ENCODE measurements at regions of chr11 and their contacts with region 1.

Region 1: DNA sequence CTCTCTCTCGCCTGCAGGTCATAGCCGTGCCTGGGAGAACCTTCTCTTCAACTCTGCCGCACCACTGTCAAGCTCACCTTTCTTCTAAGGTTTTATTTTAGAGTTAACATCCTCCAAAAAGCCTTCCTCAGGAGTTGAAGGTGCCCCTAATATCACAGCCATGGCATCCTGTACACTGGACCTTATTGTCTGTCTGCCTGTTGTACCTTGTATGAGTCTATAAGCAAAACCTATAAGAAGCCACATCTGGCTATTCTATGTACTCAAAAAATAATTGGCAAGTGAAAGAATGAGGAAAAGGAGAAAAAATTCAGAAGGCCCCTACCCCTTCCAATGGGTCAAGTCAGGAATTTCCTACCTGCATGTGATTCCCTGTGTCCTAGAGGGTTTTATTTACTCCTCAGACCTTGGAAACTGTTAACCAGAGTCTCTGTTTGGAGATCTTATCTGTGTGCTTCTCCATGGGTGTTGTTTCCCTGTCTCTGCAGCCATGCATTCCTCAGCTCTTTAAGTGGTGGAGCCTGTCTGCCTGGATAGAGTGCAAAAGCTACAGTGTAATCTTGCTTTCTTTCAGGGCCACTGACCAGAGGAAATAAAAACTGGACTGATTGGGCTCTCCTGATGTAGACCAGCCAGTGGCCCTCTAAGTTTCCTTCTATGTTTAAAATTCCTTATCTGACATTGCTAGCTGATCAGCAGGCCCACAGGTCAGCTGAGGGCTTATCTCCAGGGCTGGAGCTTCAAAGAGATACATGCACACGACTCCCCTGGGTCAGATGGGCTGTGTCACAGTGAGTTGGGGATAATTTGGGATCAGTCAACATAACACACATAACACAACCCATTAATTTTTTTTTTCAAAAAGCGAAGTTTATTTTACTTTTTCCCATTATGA is 37.6 kb upstream of the TMEM135 start:
- DNase-seq: no peak
- H3K4me3 Mint-ChIP-seq: no peak overlapping the region
- H3K27ac Mint-ChIP-seq: no peak overlapping the region
- H3K4me1 Mint-ChIP-seq: peaks cover 15% of the 10 kb centered on the region
- H3K27me3 Mint-ChIP-seq: no peaks in the 10 kb centered on the region

Region 2: DNA sequence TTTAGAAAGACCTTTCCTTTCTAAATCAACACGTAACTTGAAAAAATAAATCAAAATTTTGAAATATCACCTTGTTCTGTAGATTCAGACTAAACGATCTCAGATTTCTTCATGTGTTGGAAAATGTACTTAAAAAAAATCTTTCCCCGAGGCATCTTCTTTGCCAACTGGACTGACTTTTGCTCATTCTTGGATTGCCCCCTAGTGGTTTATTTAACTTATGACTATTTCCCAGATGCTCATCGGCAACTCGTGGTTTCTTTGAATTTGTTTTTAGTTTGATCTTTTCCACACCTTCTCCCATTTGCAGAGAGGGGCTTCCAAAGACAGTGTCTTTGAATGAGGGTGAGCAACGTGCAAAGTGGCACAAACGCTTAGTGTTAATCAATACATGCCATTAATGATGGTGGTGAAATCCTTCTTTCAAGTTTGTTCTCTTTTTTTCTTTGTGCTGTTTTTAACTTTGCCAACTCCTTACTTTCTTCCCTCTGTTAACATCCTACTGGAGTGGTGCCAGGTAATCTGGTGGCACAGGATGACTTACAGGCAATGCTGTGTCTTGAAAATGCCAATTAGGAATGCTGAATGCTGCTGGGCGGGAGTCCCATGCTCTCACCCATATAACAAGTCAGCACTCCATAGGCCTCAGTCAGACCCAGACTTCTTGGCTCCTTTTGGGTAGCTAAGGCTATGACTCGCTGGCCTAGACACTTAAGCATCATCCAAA is 181.5 kb before region 1 on chr11:
- intact Hi-C with region 1: no loop called
- DNase-seq: no peak
- H3K4me3 Mint-ChIP-seq: no peak overlapping the region
- H3K27ac Mint-ChIP-seq: no peak overlapping the region
- H3K4me1 Mint-ChIP-seq: no peaks in the 10 kb centered on the region
- H3K27me3 Mint-ChIP-seq: peaks cover 20% of the 10 kb centered on the region

Region 3: DNA sequence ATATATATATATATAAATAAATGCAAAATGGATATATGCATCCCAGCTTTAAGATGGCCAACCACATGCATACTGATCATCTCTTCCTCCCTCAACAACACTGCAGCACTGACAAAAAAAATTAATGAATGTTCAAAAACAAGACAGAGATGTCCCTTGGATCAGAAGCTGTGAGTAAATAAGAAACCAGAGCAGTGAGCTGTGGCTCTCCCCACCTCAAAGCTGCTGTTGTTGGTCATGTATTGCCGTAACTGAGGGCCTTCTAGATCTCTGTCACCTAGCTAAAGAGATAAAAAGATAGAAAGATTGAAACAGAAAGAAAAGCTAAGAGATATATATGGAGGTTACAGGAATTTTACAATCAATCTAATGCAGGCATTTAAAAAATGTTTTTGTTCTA is 22.1 kb after region 1 on chr11:
- intact Hi-C with region 1: loop called (anchors 1 kb)
- DNase-seq: peak; percentile 13
- H3K4me3 Mint-ChIP-seq: no peak overlapping the region
- H3K27ac Mint-ChIP-seq: peak overlapping the region; percentile 42
- H3K4me1 Mint-ChIP-seq: peaks cover 24% of the 10 kb centered on the region
- H3K27me3 Mint-ChIP-seq: peaks cover 5% of the 10 kb centered on the region